Activated naive CD4-positive, alpha-beta T cell treated with anti-CD3 and anti-CD28 coated beads for 36 hours (primary cell): ENCODE measurements at regions of chr4 and their contacts with region 1.

Region 1: DNA sequence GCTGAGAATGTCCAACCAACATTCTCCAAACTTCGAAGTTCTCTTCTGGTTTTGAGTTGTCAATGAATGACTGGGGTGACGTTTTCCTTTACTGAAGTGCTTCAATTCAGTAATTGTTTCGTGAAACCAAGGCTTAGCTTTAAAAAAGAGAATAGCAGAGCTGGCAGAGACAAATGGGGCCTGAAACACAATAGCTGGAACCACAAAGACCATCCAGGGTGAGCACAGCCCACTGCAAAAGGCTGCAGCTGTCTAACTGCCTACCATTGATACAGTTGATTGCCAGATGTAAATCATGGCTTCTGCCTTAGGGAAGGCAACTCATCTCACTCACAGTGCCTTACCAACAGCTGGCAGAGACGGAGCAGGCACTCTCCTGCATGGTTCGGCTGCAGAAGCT is 78.7 kb upstream of the ZNF518B start:
- DNase-seq: no peak
- H3K4me3 Mint-ChIP-seq: no peak overlapping the region
- H3K27ac Mint-ChIP-seq: no peak overlapping the region
- H3K4me1 Mint-ChIP-seq: no peaks in the 10 kb centered on the region
- H3K27me3 Mint-ChIP-seq: no peaks in the 10 kb centered on the region

Region 2: GRCh38 chr4:10403633-10404445 is 132.1 kb before region 1 on chr4:
- CTCF ChIA-PET with region 1: no interaction called
- intact Hi-C with region 1: loop called (anchors 2 kb)
- DNase-seq: peak; percentile 38
- H3K4me3 Mint-ChIP-seq: no peak overlapping the region
- H3K27ac Mint-ChIP-seq: no peak overlapping the region
- H3K4me1 Mint-ChIP-seq: no peaks in the 10 kb centered on the region
- H3K27me3 Mint-ChIP-seq: no peaks in the 10 kb centered on the region

Region 3: GRCh38 chr4:10461091-10461849 is 74.6 kb before region 1 on chr4:
- CTCF ChIA-PET with region 1: interaction called, 19 read pairs
- intact Hi-C with region 1: loop called (anchors 1 kb)
- DNase-seq: peak; percentile 65
- H3K4me3 Mint-ChIP-seq: peak overlapping the region; percentile 76
- H3K27ac Mint-ChIP-seq: no peak overlapping the region
- H3K4me1 Mint-ChIP-seq: peaks cover 25% of the 10 kb centered on the region
- H3K27me3 Mint-ChIP-seq: peaks cover 32% of the 10 kb centered on the region